Panc1 (cell line): ENCODE measurements at regions of chr11 and their contacts with region 1.

Region 1: DNA sequence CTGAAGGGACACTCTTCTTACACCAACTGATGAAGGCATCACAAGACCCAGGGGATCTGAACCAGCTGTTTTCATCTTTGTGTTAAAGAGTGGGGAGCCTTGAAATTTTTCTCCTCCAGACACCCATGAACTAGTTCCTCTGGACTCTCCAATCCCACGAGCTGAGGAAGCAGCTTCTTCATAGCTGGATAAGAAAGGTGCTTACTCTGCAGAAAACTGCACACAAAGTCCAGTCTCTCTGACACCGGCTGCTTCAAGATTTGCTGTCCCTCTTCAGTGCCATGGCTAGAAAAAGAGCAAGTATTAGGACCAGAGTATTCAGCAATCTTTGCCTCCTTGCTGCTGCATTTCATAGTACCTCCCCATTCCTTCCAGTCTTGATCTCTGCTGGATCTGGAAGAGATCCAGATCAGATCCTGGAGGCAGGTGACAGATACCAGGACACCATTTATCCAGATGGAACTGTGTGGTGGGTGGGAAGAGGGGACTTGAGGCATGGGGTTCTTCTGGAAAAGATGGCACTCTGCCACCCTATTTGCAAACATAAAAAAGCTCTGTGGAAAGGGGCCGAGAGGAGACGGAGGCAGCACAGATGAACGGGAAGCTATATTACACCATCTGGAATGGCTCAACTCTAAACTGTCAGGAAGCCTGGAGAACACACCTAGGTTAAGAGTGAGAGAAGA is 25.5 kb downstream of the IL18BP start:
- DNase-seq: no peak
- ATAC-seq: no peak
- H3K4me3 ChIP-seq: no peak overlapping the region
- H3K27ac ChIP-seq: no peak overlapping the region
- H3K4me1 ChIP-seq: 0 out of 2 replicates have a peak, but pooled peaks cover 2% of the 10 kb centered on the region
- H3K27me3 ChIP-seq: no peaks in the 10 kb centered on the region
- CTCF ChIP-seq: no peak

Region 2: DNA sequence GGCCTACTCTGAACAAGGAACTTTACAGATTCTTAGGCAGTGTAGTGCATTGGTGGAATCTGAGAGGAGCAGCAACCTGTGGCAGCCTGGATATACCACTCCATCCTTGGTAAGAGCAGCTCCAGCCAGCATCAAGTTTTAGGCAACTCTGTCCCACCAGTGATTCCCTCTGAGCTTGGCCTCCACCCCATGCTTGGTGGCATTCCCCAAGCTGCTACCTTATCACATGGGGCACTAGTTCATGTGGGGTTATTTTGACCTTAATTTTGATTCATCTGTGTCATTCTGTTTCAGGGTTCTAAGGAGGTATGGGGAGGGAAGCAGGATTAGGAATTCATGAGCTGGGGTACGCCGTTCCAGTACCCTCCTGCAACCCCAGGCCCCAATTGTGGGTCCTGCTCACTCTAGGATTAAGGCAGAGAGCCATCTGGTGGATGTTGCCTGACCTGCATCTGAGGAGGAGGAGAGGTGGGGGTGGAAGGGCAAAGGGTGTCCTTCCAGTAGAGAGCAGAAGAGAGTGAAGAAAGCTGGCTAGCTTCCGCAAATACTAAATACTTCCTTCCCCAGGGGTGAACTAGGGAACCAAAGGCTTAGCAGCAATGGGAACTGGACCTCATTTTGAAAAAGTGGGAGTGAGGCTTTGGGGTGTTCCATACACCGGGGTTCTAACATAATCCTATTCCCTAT is 66.9 kb after region 1 on chr11:
- CTCF ChIA-PET with region 1: interaction called, 25 read pairs
- POLR2A ChIA-PET with region 1: interaction called, 3 read pairs
- in situ Hi-C with region 1: no loop called
- intact Hi-C with region 1: loop called (anchors 2 kb)
- DNase-seq: no peak
- ATAC-seq: peak; percentile 92
- H3K4me3 ChIP-seq: no peak overlapping the region
- H3K27ac ChIP-seq: no peak overlapping the region
- H3K4me1 ChIP-seq: no peaks in the 10 kb centered on the region
- H3K27me3 ChIP-seq: no peaks in the 10 kb centered on the region
- CTCF ChIP-seq: peak; percentile 92

Region 3: DNA sequence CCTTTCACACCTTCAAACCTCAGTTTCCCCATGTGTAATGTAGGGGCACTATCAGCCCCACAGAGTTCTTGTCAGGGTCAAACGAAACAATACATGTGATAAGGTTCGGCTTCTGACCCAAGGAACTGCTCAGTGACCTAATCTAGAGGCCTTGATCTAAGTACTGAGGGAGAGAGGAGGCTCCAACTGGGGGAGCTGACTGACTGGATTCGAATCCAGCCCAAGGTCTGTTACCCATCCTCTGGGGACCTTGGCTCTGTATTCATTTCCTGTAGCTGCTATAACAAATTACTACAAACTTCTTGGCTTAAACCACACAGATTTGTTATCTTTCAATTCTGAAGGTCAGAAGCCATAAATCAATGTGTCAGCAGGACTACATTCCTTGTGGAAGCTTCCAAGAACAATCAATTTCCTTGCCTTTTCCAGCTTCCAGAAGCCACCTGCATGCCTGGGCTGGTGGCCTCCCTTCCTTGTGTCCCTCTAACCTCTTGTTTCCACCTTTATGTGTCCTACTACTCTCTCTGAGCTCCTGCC is 99.0 kb after region 1 on chr11:
- CTCF ChIA-PET with region 1: no interaction called
- POLR2A ChIA-PET with region 1: no interaction called
- in situ Hi-C with region 1: no loop called
- intact Hi-C with region 1: no loop called
- DNase-seq: no peak
- ATAC-seq: no peak
- H3K4me3 ChIP-seq: no peak overlapping the region
- H3K27ac ChIP-seq: no peak overlapping the region
- H3K4me1 ChIP-seq: no peaks in the 10 kb centered on the region
- H3K27me3 ChIP-seq: peaks cover 3% of the 10 kb centered on the region; the same call in 1 of the 2 replicates
- CTCF ChIP-seq: no peak

Region 4: DNA sequence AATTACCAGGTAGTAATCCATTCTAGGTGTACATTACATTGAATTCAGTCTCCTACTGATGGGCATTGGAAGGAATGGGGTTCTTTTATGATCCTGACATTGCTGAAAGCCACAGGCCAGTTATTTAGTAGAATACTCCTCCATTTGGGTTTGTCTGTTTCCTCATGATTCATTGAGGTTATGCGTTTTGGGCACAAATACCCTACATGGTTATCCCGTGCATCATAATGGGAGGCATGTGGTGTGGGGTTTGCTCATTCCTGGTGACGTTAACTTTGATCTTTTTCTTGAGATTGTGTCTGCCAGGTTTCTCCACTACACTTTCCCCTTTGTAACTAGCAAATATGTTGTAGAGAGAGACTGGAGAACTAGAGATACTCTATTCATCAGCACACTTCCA is 116.9 kb after region 1 on chr11:
- CTCF ChIA-PET with region 1: interaction called, 11 read pairs
- POLR2A ChIA-PET with region 1: no interaction called
- in situ Hi-C with region 1: no loop called
- intact Hi-C with region 1: no loop called
- DNase-seq: no peak
- ATAC-seq: no peak
- H3K4me3 ChIP-seq: no peak overlapping the region
- H3K27ac ChIP-seq: no peak overlapping the region
- H3K4me1 ChIP-seq: no peaks in the 10 kb centered on the region
- H3K27me3 ChIP-seq: peaks cover 4% of the 10 kb centered on the region; the same call in 1 of the 2 replicates
- CTCF ChIP-seq: no peak

Region 5: DNA sequence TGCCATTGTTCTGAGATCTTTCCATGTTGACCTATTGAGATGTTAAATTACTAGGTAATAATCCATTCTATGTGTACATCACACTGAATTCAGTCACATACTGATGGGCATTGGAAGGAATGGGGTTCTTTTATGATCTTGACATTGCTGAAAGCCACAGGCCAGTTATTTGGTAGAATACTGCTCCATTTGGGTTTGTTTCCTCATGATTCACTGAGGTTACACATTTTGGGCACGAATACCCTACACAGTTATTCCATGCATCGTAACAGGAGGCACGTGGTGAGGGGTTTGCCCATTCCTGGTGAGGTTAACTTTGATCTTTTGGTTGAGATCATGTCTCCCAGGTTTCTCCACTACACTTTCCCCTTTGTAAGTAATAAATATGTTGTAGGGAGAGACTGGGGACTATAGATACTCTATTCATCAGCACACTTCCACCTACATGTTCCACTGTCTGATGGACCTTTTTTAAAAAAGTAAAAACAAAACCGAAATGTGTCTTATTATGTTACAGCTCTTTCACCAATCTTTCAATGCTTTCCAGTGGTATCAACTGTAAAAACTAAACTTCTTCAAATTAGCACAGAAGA is 155.7 kb after region 1 on chr11:
- CTCF ChIA-PET with region 1: interaction called, 15 read pairs
- POLR2A ChIA-PET with region 1: no interaction called
- in situ Hi-C with region 1: no loop called
- intact Hi-C with region 1: loop called (anchors 2 kb)
- DNase-seq: no peak
- ATAC-seq: no peak
- H3K4me3 ChIP-seq: no peak overlapping the region
- H3K27ac ChIP-seq: no peak overlapping the region
- H3K4me1 ChIP-seq: no peaks in the 10 kb centered on the region
- H3K27me3 ChIP-seq: no peaks in the 10 kb centered on the region
- CTCF ChIP-seq: no peak

Region 6: DNA sequence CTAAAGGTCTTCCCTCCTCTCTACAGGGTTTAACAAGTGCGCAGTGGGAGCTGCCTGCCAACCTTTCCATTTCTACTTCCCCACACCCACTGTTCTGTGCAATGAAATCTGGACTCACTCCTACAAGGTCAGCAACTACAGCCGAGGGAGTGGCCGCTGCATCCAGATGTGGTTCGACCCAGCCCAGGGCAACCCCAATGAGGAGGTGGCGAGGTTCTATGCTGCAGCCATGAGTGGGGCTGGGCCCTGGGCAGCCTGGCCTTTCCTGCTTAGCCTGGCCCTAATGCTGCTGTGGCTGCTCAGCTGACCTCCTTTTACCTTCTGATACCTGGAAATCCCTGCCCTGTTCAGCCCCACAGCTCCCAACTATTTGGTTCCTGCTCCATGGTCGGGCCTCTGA is 171.7 kb after region 1 on chr11:
- CTCF ChIA-PET with region 1: no interaction called
- POLR2A ChIA-PET with region 1: no interaction called
- in situ Hi-C with region 1: no loop called
- intact Hi-C with region 1: no loop called
- DNase-seq: no peak
- ATAC-seq: no peak
- H3K4me3 ChIP-seq: no peak overlapping the region
- H3K27ac ChIP-seq: no peak overlapping the region
- H3K4me1 ChIP-seq: no peaks in the 10 kb centered on the region
- H3K27me3 ChIP-seq: no peaks in the 10 kb centered on the region
- CTCF ChIP-seq: no peak

Region 7: GRCh38 chr11:72293910-72294615 is 269.9 kb after region 1 on chr11:
- CTCF ChIA-PET with region 1: no interaction called
- POLR2A ChIA-PET with region 1: no interaction called
- in situ Hi-C with region 1: no loop called
- intact Hi-C with region 1: no loop called
- DNase-seq: no peak
- ATAC-seq: no peak
- H3K4me3 ChIP-seq: no peak overlapping the region
- H3K27ac ChIP-seq: no peak overlapping the region
- H3K4me1 ChIP-seq: no peaks in the 10 kb centered on the region
- H3K27me3 ChIP-seq: no peaks in the 10 kb centered on the region
- CTCF ChIP-seq: no peak